ENCODE measurements at regions of chr19 and their contacts with region 1.

Region 1: DNA sequence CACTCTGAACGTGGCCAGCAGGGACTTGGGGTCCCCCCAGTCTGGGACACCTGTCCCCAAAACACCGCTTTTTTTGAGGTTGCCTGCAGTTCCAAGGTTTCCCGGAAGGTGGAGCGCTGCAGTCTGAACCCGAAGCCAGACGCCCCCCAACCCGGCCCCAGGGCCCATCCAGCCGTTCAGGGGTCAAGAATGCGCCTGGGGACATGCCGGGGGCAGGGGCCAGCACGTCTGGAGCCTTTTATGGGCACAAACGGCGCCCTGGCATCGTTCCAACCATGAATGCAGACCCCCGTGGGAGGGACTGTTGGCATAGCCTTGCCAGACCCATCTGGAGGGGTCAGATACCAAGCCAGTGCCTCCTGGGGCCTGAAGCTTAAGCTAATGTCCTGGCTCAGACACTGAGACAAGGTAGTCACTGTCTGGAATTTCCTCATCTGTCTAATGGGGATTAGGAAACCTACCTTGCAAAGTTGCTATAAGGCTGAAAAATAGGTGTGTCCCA is 6.9 kb downstream of the S1PR5 start:
- DNase-seq: peak; percentile 46 to 79 (median 67)
- ATAC-seq: no peak
- H3K4me3 ChIP-seq: no peak overlapping the region
- H3K4me3 Mint-ChIP-seq: no peak overlapping the region
- H3K27ac ChIP-seq: peak overlapping the region in 1 of 2 experiments; percentile 32
- H3K27ac Mint-ChIP-seq: no peak overlapping the region
- H3K4me1 ChIP-seq: peaks cover 30% of the 10 kb centered on the region
- H3K4me1 Mint-ChIP-seq: peaks cover 33% of the 10 kb centered on the region
- H3K27me3 ChIP-seq: peaks cover 4 to 12% of the 10 kb centered on the region in 2 experiments
- H3K27me3 Mint-ChIP-seq: peaks cover 20% of the 10 kb centered on the region
- CTCF ChIP-seq: peak; percentile 72

Region 2: GRCh38 chr19:10478903-10479384 is 31.4 kb before region 1 on chr19:
- CTCF ChIA-PET with region 1: interaction called, 14 read pairs
- POLR2A ChIA-PET with region 1: no interaction called
- intact Hi-C with region 1: no loop called
- DNase-seq: peak; percentile 75 to 96 (median 88)
- ATAC-seq: peak; percentile 97
- H3K4me3 ChIP-seq: peak overlapping the region; percentile 27 to 28
- H3K4me3 Mint-ChIP-seq: peak overlapping the region; percentile 70
- H3K27ac ChIP-seq: no peak overlapping the region
- H3K27ac Mint-ChIP-seq: no peak overlapping the region
- H3K4me1 ChIP-seq: peaks cover 10% of the 10 kb centered on the region
- H3K4me1 Mint-ChIP-seq: peaks cover 14% of the 10 kb centered on the region
- H3K27me3 ChIP-seq: no peaks in the 10 kb centered on the region
- H3K27me3 Mint-ChIP-seq: no peaks in the 10 kb centered on the region
- CTCF ChIP-seq: peak; percentile 74

Region 3: GRCh38 chr19:10551698-10552301 is 41.4 kb after region 1 on chr19:
- CTCF ChIA-PET with region 1: interaction called, 10 read pairs
- POLR2A ChIA-PET with region 1: interaction called, 3 read pairs
- intact Hi-C with region 1: no loop called
- DNase-seq: peak in 6 of 9 experiments; percentile 45 to 80 (median 58)
- ATAC-seq: no peak
- H3K4me3 ChIP-seq: no peak overlapping the region
- H3K4me3 Mint-ChIP-seq: no peak overlapping the region
- H3K27ac ChIP-seq: peak overlapping the region; percentile 22 to 64
- H3K27ac Mint-ChIP-seq: peak overlapping the region; percentile 92
- H3K4me1 ChIP-seq: peaks cover 70% of the 10 kb centered on the region
- H3K4me1 Mint-ChIP-seq: peaks cover 58% of the 10 kb centered on the region
- H3K27me3 ChIP-seq: no peaks in the 10 kb centered on the region
- H3K27me3 Mint-ChIP-seq: no peaks in the 10 kb centered on the region
- CTCF ChIP-seq: no peak

Region 4: DNA sequence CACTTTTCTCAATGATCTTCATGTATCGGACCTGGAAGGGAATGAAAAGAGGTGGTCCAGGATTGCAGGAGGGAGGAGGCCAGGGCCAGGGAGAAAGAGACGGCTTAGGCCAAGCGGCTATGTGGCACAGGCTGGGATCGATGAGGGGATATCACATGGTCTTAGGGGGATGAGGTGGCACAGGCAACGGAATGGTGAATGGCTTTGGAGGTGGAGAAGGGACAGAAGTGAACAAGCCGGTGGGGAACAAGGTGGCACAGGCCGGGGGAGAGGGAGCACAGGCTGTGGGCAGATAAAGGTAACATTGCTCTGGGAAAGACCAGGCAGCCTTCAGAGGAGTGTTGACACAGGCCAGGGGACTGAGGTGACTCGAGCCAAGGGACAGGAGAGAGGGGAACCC is 64.1 kb after region 1 on chr19:
- CTCF ChIA-PET with region 1: interaction called, 16 read pairs
- POLR2A ChIA-PET with region 1: no interaction called
- intact Hi-C with region 1: loop called (anchors 1 kb)
- DNase-seq: no peak
- ATAC-seq: no peak
- H3K4me3 ChIP-seq: no peak overlapping the region
- H3K4me3 Mint-ChIP-seq: no peak overlapping the region
- H3K27ac ChIP-seq: no peak overlapping the region
- H3K27ac Mint-ChIP-seq: no peak overlapping the region
- H3K4me1 ChIP-seq: peaks cover 9% of the 10 kb centered on the region
- H3K4me1 Mint-ChIP-seq: peaks cover 8% of the 10 kb centered on the region
- H3K27me3 ChIP-seq: no peaks in the 10 kb centered on the region
- H3K27me3 Mint-ChIP-seq: no peaks in the 10 kb centered on the region
- CTCF ChIP-seq: no peak

Measured in CD8-positive, alpha-beta T cell (primary cell).